Head of caudate nucleus (tissue), 42 donors: ENCODE measurements at regions of chr9 and their contacts with region 1.

Region 1: GRCh38 chr9:127396808-127397497 is at the start of gene SLC2A8:
- DNase-seq: peak; percentile 97 to 100 (median 100)

Region 2: GRCh38 chr9:127224883-127225739 is 171.8 kb before region 1 on chr9:
- intact Hi-C with region 1: loop called (anchors 5 kb)
- DNase-seq: peak; percentile 94 to 100 (median 99)

Region 3: GRCh38 chr9:127351182-127352166 is 45.5 kb before region 1 on chr9:
- intact Hi-C with region 1: no loop called
- DNase-seq: no peak